ENCODE measurements at regions of chr12 and their contacts with region 1.

Region 1: DNA sequence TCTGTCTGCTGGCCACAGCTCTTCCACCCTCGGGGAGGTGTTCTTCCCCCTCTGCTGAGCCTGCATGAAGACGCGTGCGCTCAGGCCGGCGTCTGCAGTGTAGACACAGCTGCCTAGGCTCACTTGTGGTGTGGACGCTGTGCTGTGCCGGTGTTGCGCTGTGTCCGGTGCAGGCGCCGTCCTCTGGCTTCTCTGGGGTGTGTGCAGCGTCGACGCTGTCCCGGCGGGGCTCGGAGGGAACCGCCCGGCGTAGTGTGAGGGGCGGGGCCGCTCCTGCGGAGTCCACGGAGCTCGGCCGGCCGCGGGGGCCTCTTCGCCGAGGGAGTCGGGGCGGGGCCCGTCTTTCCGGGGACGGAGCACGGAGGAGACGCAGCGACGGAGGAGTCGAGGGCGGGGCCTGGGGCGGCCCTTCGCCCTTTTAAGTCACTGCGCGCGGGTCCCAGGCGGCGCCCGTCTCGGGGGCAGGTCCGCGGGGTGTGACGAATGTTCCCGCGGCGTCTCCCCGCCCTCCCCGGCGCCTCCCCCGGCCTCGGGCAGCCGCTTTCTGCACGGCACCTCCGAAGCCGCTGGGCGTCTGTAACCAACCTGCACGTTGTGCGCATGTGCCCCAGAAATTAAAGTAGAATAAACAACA is 45.2 kb downstream of the NOC4L start:
- H3K4me3 Mint-ChIP-seq: peak overlapping the region; percentile 94
- H3K27ac Mint-ChIP-seq: peak overlapping the region; percentile 83
- H3K4me1 Mint-ChIP-seq: peaks cover 49% of the 10 kb centered on the region
- H3K27me3 Mint-ChIP-seq: peaks cover 75% of the 10 kb centered on the region

Region 2: GRCh38 chr12:132144115-132144812 is 45.2 kb before region 1 on chr12 and contains the starts of genes DDX51 and NOC4L:
- intact Hi-C with region 1: loop called (anchors 1 kb)
- H3K4me3 Mint-ChIP-seq: peak within 1 kb of the TSS; percentile 81
- H3K27ac Mint-ChIP-seq: peak within 1 kb of the TSS; percentile 88
- H3K4me1 Mint-ChIP-seq: peaks cover 33% of the 10 kb centered on the region
- H3K27me3 Mint-ChIP-seq: no peaks in the 10 kb centered on the region

Measured in dendritic cell treated with granulocyte-macrophage colony-stimulating factor and Interleukin-4, amounts not matched to agents 40 ng/mL and 50 ng/mL, for 4 days (primary cell).